A673 (cell line): ENCODE measurements at regions of chr7 and their contacts with region 1.

Region 1: GRCh38 chr7:140494867-140495266 is 15.6 kb upstream of the MKRN1 start:
- DNase-seq: no peak
- H3K4me3 ChIP-seq: no peak overlapping the region
- H3K27ac ChIP-seq: no peak overlapping the region
- H3K4me1 ChIP-seq: no peaks in the 10 kb centered on the region
- H3K27me3 ChIP-seq: no peaks in the 10 kb centered on the region
- CTCF ChIP-seq: no peak

Region 2: DNA sequence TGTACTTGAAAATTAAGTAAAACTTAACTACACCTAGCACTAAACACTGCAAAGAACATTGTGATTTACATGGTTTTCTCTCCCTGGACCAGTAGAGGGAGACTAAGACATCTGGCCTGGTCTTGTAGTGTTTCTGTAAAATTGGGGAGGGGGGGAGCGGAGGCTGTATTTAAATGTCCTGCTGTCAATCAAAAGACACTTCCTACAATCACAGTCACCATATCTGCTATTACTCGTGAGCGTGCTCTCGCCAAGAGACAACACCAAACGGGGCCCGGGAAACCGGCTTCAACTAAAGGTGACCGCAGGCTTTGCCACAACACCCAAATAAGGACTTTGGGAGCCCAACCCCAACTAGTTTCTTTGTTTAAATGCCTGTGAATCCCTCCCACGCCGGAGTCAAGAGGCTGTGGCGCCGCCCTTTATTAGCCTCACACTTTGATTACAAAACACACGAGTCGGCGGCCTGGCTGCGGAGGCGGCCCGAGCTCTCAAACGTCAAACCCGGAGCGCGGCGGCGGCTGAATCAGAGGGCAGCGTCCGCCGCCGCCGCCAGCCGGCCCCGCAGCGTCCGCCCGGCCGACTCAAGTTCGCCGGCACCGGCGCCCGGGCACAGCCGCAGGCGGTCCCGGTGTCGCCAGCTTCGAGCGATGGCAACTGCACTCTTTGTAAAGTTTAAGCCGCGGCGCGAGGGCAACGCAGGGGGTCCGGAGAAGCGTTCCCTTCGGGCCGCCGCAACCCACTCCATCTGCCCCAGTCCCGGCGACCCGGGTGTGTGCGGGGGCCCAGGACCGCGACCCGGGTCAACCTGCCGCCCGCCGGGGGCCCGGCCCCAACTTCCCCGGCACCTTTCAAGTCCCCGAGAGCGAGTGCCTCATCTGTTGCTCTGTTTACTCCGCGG is 319.4 kb before region 1 on chr7:
- CTCF ChIA-PET with region 1: no interaction called
- POLR2A ChIA-PET with region 1: no interaction called
- intact Hi-C with region 1: loop called (anchors 10 kb)
- DNase-seq: peak; percentile 95
- H3K4me3 ChIP-seq: peak overlapping the region; percentile 84
- H3K27ac ChIP-seq: peak overlapping the region; percentile 77
- H3K4me1 ChIP-seq: no peaks in the 10 kb centered on the region
- H3K27me3 ChIP-seq: no peaks in the 10 kb centered on the region
- CTCF ChIP-seq: peak; percentile 86

Region 3: DNA sequence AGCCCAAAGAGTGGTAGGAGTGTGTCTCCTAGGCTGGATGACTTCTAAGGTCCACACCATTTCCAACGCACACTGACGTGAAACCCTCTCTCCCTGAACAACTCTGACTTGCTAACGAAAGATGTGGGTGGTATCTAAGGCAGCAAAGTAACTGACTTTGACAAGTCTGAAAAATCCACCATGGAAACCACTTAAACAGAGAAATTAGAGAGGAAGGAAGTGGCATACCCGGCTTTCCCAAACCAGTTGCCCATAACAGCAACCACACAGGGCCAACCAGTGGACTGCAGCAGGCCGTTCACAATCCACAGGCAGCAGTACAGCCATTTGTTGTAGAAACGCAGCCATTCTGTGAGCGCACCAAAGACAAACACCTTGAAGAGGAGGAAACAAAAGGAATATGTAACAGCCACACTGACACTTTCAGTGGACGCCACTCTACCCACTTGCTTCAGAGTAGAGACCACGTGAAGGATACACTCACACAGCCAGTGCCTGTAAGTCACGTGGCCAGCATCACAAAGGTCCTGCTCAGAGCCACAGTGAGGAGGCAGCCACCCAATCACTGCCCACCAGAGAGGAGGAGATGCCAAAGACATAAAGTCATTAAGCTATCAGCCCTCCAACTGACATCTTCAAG is 136.3 kb before region 1 on chr7:
- CTCF ChIA-PET with region 1: no interaction called
- POLR2A ChIA-PET with region 1: no interaction called
- intact Hi-C with region 1: no loop called
- DNase-seq: no peak
- H3K4me3 ChIP-seq: no peak overlapping the region
- H3K27ac ChIP-seq: no peak overlapping the region
- H3K4me1 ChIP-seq: no peaks in the 10 kb centered on the region
- H3K27me3 ChIP-seq: no peaks in the 10 kb centered on the region
- CTCF ChIP-seq: no peak